ENCODE measurements at regions of chr3 and their contacts with region 1.

Region 1: GRCh38 chr3:58237238-58237940 is at the start of gene ABHD6:
- DNase-seq: peak; percentile 72 to 93 (median 88)
- H3K4me3 ChIP-seq: peak within 1 kb of the TSS; percentile 58
- H3K4me3 Mint-ChIP-seq: peak within 1 kb of the TSS; percentile 88 to 96 (median 92)
- H3K27ac ChIP-seq: peak within 1 kb of the TSS; percentile 62
- H3K27ac Mint-ChIP-seq: peak within 1 kb of the TSS; percentile 85 to 92 (median 91)
- H3K4me1 ChIP-seq: peaks cover 12% of the 10 kb centered on the region
- H3K4me1 Mint-ChIP-seq: peaks cover 7 to 21% (median 12%) of the 10 kb centered on the region in 4 donors
- H3K27me3 ChIP-seq: no peaks in the 10 kb centered on the region
- H3K27me3 Mint-ChIP-seq: peaks cover 3 to 4% of the 10 kb centered on the region in 2 donors
- total RNA-seq, gene ABHD6: 5.1 to 7.2 TPM

Region 2: DNA sequence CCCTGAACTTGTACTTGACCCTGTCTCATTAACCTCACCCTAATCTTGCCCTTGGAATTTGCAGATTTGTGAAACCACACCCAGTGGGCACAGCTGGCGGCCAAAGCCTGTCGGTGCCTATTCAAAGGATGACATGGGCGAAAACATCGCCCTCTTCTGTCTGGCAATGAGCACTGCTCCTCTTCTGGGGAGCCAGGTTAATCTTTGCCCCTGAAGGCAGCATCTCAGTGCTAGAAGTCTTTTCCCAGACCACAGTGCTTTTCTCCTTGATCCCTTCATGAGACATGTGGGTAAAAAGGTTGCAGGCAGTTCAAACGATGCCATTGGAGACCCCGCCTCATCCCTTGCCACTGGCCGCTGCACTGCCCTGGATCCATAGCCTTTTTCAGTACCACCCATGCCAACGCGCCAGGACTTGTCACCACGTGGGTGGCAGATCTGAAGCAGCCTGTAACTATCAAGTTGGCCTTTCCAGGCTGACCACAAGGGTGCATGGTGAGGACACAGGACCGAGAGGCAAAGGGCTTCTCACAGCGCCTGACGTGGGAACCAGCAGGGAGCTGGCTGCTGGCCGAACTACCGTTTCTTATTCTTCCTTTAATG is 20.1 kb before region 1 on chr3:
- CTCF ChIA-PET with region 1: interaction called, 8 read pairs
- POLR2A ChIA-PET with region 1: interaction called, 3 read pairs
- intact Hi-C with region 1: loop called (anchors 1 kb)
- DNase-seq: peak; percentile 47 to 56 (median 50)
- H3K4me3 ChIP-seq: no peak overlapping the region
- H3K4me3 Mint-ChIP-seq: peak overlapping the region in 1 of 8 donors; percentile 61
- H3K27ac ChIP-seq: no peak overlapping the region
- H3K27ac Mint-ChIP-seq: no peak overlapping the region
- H3K4me1 ChIP-seq: peaks cover 6% of the 10 kb centered on the region
- H3K4me1 Mint-ChIP-seq: peaks cover 3 to 9% (median 5%) of the 10 kb centered on the region in 4 donors
- H3K27me3 ChIP-seq: no peaks in the 10 kb centered on the region
- H3K27me3 Mint-ChIP-seq: peaks cover 0 to 2% of the 10 kb centered on the region in 2 donors

Region 3: DNA sequence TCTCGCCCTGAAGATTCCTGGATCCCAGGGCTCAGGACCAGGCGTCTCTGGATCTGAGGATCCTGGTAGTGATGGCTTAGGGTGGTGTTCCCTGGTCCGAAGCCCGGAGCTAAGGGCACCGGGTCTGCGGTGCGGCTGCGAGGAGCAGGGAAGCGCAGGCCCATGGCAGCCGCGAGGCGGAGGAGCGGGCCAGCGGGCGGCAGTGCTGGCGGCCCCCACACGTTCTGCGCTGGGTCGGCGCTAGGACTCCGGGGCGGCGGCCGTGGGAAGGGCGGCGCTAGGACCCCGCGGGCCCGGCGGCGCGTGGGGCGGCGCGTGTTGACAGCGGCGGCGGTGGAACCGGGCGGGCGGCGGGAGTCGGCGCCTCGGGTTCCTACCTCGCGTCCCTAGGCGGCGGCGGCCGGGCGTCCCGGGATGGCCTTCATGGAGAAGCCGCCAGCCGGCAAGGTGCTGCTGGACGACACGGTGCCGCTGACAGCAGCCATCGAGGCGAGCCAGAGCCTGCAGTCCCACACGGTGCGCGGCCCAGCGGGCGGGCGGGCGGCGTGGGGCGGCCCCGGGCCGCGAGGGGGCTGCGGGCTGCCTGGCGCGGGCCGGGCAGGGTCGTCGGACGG is 95.3 kb after region 1 on chr3 and contains the start of gene PXK:
- CTCF ChIA-PET with region 1: no interaction called
- POLR2A ChIA-PET with region 1: no interaction called
- intact Hi-C with region 1: loop called (anchors 5 kb)
- DNase-seq: peak; percentile 75 to 84 (median 81)
- H3K4me3 ChIP-seq: peak within 1 kb of the TSS; percentile 46 to 57
- H3K4me3 Mint-ChIP-seq: peak within 1 kb of the TSS; percentile 96 to 100 (median 100)
- H3K27ac ChIP-seq: peak within 1 kb of the TSS; percentile 56
- H3K27ac Mint-ChIP-seq: peak within 1 kb of the TSS; percentile 85 to 98 (median 95)
- H3K4me1 ChIP-seq: peaks cover 30% of the 10 kb centered on the region
- H3K4me1 Mint-ChIP-seq: peaks cover 23 to 48% (median 33%) of the 10 kb centered on the region in 4 donors
- H3K27me3 ChIP-seq: no peaks in the 10 kb centered on the region
- H3K27me3 Mint-ChIP-seq: no peaks in the 10 kb centered on the region
- total RNA-seq, gene PXK: 20.0 to 20.2 TPM

Measured in CD4-positive, alpha-beta memory T cell (primary cell).